ENCODE measurements at regions of chr17 and their contacts with region 1.

Region 1: GRCh38 chr17:41648411-41649195 is 24.2 kb upstream of the KRT17 start:
- DNase-seq: peak; percentile 81 to 91
- ATAC-seq: peak; percentile 91 to 93 (median 92)
- H3K4me3 ChIP-seq: peak overlapping the region; percentile 30
- H3K4me3 Mint-ChIP-seq: peak overlapping the region; percentile 73
- H3K27ac ChIP-seq: no peak overlapping the region
- H3K27ac Mint-ChIP-seq: peak overlapping the region in 1 of 2 donors; percentile 41
- H3K4me1 ChIP-seq: peaks cover 14% of the 10 kb centered on the region
- H3K4me1 Mint-ChIP-seq: peaks cover 9 to 10% of the 10 kb centered on the region in 2 donors
- H3K27me3 ChIP-seq: no peaks in the 10 kb centered on the region
- H3K27me3 Mint-ChIP-seq: peaks cover 0 to 4% of the 10 kb centered on the region in 2 donors
- CTCF ChIP-seq: peak; percentile 70

Region 2: DNA sequence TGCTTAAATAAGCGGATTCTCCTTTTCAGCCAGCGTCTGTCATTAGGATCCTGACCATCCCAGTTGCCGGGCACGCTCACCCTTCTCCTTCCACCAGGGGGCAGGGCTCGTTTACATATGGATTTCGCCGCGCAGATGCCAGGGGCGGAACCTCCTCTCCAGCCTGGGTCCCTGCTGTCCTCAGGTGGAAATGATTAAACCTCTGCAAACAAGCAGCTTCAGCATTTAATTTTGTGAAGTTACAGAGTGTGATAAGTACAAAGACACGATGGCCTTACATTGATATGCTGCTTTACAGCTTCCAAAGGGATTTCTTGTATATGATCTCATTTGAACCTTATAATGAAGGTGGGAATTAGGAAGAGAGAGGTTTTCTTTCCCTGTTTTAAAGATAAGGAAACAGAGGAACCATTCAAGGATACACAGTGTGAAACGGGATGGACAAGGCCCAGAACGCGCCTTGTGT is 845.0 kb before region 1 on chr17:
- intact Hi-C with region 1: loop called (anchors 1 kb)
- DNase-seq: peak; percentile 56 to 85
- ATAC-seq: peak; percentile 82 to 92 (median 87)
- H3K4me3 ChIP-seq: no peak overlapping the region
- H3K4me3 Mint-ChIP-seq: no peak overlapping the region
- H3K27ac ChIP-seq: no peak overlapping the region
- H3K27ac Mint-ChIP-seq: no peak overlapping the region
- H3K4me1 ChIP-seq: no peaks in the 10 kb centered on the region
- H3K4me1 Mint-ChIP-seq: no peaks in the 10 kb centered on the region
- H3K27me3 ChIP-seq: peaks cover 15% of the 10 kb centered on the region
- H3K27me3 Mint-ChIP-seq: peaks cover 29 to 52% of the 10 kb centered on the region in 2 donors
- CTCF ChIP-seq: peak; percentile 91

Region 3: DNA sequence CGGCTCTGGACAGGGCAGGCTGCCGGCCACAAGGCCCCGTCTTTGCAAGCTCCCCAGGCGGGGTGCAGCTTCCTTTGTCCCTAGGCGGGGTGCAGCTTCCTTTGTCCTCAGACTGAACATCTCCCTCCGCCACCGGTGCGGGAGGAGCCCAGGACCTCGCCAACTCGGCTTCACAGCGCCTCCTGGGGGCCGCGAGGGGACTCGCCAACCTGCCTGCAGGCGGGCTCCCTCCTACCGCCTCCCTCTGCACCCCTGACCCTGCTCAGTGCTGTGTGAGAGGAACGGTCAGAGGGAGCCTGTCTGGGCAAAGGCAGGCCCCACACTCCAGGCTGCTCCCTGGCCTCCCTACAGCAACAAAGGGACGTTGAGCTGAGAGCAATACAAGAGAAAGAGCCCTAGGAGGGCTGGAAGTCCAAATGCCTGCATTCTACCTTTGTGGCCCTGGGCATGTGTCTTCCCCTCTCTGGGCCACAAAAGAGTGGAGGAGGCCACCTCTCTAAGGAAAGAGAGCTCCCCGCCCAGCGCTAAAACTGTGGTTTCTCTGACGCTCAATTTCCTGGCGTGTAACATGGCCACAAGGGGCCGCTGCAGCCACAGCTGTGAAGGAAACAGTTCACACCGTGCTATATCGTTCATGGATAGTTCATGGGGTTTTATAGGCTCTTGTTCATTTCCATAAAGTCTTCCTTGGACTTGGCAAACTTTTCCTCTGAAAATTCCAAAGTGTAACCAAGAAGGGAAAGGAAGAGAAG is 99.6 kb before region 1 on chr17:
- intact Hi-C with region 1: loop called (anchors 1 kb)
- DNase-seq: peak; percentile 83 to 91
- ATAC-seq: peak; percentile 91 to 95 (median 92)
- H3K4me3 ChIP-seq: no peak overlapping the region
- H3K4me3 Mint-ChIP-seq: peak overlapping the region; percentile 69
- H3K27ac ChIP-seq: peak overlapping the region; percentile 47
- H3K27ac Mint-ChIP-seq: peak overlapping the region; percentile 58 to 65
- H3K4me1 ChIP-seq: peaks cover 17% of the 10 kb centered on the region
- H3K4me1 Mint-ChIP-seq: peaks cover 9 to 23% of the 10 kb centered on the region in 2 donors
- H3K27me3 ChIP-seq: no peaks in the 10 kb centered on the region
- H3K27me3 Mint-ChIP-seq: peaks cover 17 to 20% of the 10 kb centered on the region in 2 donors
- CTCF ChIP-seq: peak; percentile 87

Region 4: DNA sequence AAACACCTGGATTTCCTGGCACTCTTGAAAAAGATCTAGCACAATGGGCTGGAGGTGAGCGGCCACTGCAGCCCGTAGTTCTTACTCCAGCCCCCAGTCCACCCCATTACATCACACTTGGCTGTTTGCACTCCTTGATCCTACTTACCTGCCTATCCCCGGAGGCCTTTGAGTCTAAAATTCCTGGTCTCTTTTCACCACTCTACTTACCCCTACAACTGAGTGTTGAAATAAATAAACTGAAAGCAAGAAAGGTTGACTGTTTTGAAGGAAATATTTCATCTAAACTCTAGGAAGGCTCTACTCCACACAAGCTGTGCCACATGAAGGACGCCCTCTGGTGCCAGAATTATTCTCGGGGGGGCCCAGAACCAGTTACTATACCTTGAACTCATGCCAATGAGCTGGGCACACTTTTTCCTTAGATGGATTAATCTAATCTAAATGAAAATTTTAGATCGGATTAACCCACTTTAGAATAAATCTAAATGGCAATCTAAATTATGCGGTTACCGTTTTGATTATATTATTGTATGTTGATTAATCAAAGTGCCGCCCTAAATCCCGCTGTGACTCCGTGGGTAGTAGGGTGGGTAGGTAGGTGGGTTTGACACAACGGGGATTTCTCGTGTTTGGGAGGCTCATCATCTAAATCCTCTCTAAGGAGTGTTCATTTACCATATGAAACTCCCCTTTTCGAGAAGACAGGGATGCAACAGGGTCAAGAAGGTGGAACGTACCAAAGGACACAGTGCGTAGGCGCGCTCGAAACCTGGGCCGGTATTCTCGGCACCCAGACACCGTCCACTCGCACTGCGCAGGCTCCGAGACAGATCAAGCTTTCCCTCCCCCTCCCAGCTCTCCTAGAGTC is 39.5 kb after region 1 on chr17:
- intact Hi-C with region 1: no loop called
- DNase-seq: peak; percentile 35 to 81
- ATAC-seq: peak in 1 of 3 donors; percentile 2
- H3K4me3 ChIP-seq: peak overlapping the region; percentile 27
- H3K4me3 Mint-ChIP-seq: peak overlapping the region; percentile 96
- H3K27ac ChIP-seq: peak overlapping the region; percentile 90
- H3K27ac Mint-ChIP-seq: peak overlapping the region; percentile 99 to 100
- H3K4me1 ChIP-seq: peaks cover 21% of the 10 kb centered on the region
- H3K4me1 Mint-ChIP-seq: peaks cover 47 to 49% of the 10 kb centered on the region in 2 donors
- H3K27me3 ChIP-seq: no peaks in the 10 kb centered on the region
- H3K27me3 Mint-ChIP-seq: no peaks in the 10 kb centered on the region
- CTCF ChIP-seq: peak; percentile 12

Measured in natural killer cell (primary cell).